ENCODE measurements at regions of chrX and their contacts with region 1.

Region 1: GRCh38 chrX:54891573-54891972 is 29.1 kb upstream of the TRO start:
- DNase-seq: peak; percentile 1 to 4 (median 3)
- H3K4me3 ChIP-seq: no peak overlapping the region
- H3K4me3 Mint-ChIP-seq: no peak overlapping the region
- H3K27ac ChIP-seq: no peak overlapping the region
- H3K27ac Mint-ChIP-seq: no peak overlapping the region
- H3K4me1 ChIP-seq: no peaks in the 10 kb centered on the region
- H3K4me1 Mint-ChIP-seq: no peaks in the 10 kb centered on the region
- H3K27me3 ChIP-seq: no peaks in the 10 kb centered on the region
- H3K27me3 Mint-ChIP-seq: peaks cover 0 to 3% (median 1%) of the 10 kb centered on the region in 3 donors
- CTCF ChIP-seq: peak; percentile 21

Region 2: DNA sequence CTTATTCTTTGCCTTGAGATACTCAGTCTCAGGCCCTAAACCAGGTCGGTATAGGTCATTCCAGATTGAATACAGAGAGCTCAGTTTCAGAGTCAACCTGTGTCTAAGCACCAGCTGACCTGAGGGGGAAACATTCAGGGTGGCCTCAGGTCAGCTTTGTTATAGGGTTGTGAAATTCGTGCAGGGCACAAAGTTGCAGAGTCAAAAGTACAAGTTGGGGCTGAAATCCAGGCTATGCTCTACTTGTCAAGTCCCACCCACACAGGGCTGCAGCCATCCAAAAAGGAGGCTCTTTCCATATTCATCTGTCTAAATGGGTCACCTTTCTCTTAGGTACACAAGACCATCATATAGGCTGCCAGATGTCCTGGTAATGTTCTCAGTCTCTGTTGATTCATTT is 183.2 kb before region 1 on chrX:
- intact Hi-C with region 1: no loop called
- DNase-seq: no peak
- H3K4me3 ChIP-seq: no peak overlapping the region
- H3K4me3 Mint-ChIP-seq: no peak overlapping the region
- H3K27ac ChIP-seq: no peak overlapping the region
- H3K27ac Mint-ChIP-seq: no peak overlapping the region
- H3K4me1 ChIP-seq: no peaks in the 10 kb centered on the region
- H3K4me1 Mint-ChIP-seq: no peaks in the 10 kb centered on the region
- H3K27me3 ChIP-seq: no peaks in the 10 kb centered on the region
- H3K27me3 Mint-ChIP-seq: peaks cover 1 to 8% (median 2%) of the 10 kb centered on the region in 3 donors
- CTCF ChIP-seq: no peak

Region 3: GRCh38 chrX:55057675-55058249 is 166.2 kb after region 1 on chrX:
- intact Hi-C with region 1: loop called in 1 of 2 experiments (anchors 5 kb)
- DNase-seq: peak; percentile 9 to 34 (median 21)
- H3K4me3 ChIP-seq: no peak overlapping the region
- H3K4me3 Mint-ChIP-seq: no peak overlapping the region
- H3K27ac ChIP-seq: no peak overlapping the region
- H3K27ac Mint-ChIP-seq: no peak overlapping the region
- H3K4me1 ChIP-seq: no peaks in the 10 kb centered on the region
- H3K4me1 Mint-ChIP-seq: peaks cover 6% of the 10 kb centered on the region
- H3K27me3 ChIP-seq: no peaks in the 10 kb centered on the region
- H3K27me3 Mint-ChIP-seq: peaks cover 4 to 9% (median 6%) of the 10 kb centered on the region in 3 donors
- CTCF ChIP-seq: peak; percentile 74

Measured in CD14-positive monocyte (primary cell).